MCF 10A (cell line): ENCODE measurements at regions of chr1 and their contacts with region 1.

Region 1: DNA sequence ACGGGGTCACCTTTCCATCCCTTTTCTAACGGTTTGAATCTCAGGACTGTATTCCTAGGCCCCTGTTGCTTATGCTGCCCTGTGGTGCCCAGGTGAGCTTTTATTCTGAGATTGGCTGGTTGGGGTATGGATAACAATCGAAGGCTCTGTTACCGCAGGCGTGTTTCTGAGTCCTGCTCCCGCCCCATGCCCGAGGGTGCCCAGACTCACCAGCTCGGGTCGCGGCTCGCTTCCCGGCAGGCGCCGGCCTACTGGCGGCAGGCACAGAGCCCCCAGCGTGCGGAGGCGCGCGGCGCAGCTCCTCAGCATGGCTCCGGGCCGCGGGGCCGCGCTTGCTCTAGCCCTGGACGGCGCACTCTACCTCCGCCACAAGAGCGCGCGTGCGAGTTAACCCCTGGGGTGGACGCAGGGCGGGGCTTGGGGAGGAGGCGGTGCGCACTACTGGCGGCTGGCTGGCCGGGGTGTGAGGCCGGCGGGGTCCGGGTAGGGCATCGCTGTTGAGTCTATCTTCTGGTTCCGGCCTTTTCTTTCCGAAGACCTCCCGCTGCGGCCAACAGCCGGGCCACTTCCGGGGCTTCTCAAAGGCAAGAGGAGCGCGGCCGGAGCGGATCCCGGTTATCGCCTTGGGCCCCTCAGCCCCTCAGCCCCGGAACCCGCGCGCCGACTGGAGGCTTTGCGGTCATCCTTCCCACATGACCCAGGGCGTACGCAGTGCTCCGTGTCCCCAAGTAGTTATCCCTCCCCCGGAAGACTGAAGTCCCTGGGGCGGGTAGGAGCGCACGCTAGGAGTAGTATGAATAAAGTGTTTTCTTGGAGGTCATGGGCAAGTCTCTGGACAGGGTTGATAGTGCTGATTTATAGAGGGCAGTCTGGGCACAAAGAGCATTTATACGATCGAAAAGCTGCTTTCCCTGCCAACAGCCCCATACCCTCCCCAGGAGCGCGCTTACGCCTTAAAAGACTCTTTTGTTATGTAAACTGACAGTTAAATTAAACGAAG is at the start of gene THEM4:
- DNase-seq: peak; percentile 99
- H3K4me3 Mint-ChIP-seq: peak within 1 kb of the TSS; percentile 99
- H3K27ac Mint-ChIP-seq: peak within 1 kb of the TSS; percentile 99
- H3K4me1 Mint-ChIP-seq: peaks cover 17% of the 10 kb centered on the region
- H3K27me3 Mint-ChIP-seq: no peaks in the 10 kb centered on the region
- CTCF ChIP-seq: peak; percentile 25
- total RNA-seq, gene THEM4: 27.5 and 29.1 TPM in 2 replicates

Region 2: GRCh38 chr1:151619489-151620093 is 289.9 kb before region 1 on chr1:
- CTCF ChIA-PET with region 1: no interaction called
- POLR2A ChIA-PET with region 1: no interaction called
- intact Hi-C with region 1: no loop called
- DNase-seq: peak; percentile 58
- H3K4me3 Mint-ChIP-seq: no peak overlapping the region
- H3K27ac Mint-ChIP-seq: peak overlapping the region; percentile 17
- H3K4me1 Mint-ChIP-seq: peaks cover 37% of the 10 kb centered on the region
- H3K27me3 Mint-ChIP-seq: no peaks in the 10 kb centered on the region
- CTCF ChIP-seq: no peak

Region 3: DNA sequence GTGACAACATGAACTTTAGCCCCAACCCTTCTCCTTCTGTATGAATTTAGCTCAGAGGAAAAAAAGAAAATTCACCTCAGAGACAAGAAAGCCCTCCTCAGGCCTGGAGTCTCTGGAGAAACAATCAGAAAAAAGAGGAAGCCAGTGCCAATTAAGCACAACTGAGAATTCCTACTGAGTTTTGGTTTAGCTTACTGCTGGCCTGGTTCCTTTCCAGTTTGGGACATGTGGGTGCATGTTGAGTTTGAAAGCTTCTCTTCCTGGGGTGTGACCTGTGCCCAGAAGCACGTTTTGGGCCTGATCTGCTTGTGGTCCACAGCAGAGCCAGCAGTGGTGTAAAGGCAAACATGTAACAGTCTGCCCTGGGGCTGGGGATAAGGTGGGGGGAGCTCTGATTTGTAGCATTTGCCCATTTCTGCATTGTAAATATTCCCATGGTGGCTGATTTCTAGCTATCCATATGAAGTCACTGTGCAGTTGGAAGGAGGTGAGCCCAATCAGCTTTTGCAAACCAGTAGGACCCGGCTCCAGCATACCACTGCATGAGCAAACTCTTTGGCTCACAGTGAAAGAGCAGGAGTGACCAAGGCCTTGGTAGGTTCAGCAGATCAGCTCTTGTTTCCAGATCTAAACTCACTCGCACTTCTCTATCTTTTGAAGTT is 51.3 kb before region 1 on chr1:
- CTCF ChIA-PET with region 1: interaction called, 3 read pairs
- POLR2A ChIA-PET with region 1: interaction called, 14 read pairs
- intact Hi-C with region 1: no loop called
- DNase-seq: peak; percentile 66
- H3K4me3 Mint-ChIP-seq: no peak overlapping the region
- H3K27ac Mint-ChIP-seq: peak overlapping the region; percentile 84
- H3K4me1 Mint-ChIP-seq: peaks cover 40% of the 10 kb centered on the region
- H3K27me3 Mint-ChIP-seq: no peaks in the 10 kb centered on the region
- CTCF ChIP-seq: no peak

Region 4: GRCh38 chr1:151898513-151898991 is 10.9 kb before region 1 on chr1:
- CTCF ChIA-PET with region 1: interaction called, 29 read pairs
- POLR2A ChIA-PET with region 1: interaction called, 56 read pairs
- intact Hi-C with region 1: no loop called
- DNase-seq: no peak
- H3K4me3 Mint-ChIP-seq: no peak overlapping the region
- H3K27ac Mint-ChIP-seq: no peak overlapping the region
- H3K4me1 Mint-ChIP-seq: peaks cover 10% of the 10 kb centered on the region
- H3K27me3 Mint-ChIP-seq: no peaks in the 10 kb centered on the region
- CTCF ChIP-seq: no peak

Region 5: DNA sequence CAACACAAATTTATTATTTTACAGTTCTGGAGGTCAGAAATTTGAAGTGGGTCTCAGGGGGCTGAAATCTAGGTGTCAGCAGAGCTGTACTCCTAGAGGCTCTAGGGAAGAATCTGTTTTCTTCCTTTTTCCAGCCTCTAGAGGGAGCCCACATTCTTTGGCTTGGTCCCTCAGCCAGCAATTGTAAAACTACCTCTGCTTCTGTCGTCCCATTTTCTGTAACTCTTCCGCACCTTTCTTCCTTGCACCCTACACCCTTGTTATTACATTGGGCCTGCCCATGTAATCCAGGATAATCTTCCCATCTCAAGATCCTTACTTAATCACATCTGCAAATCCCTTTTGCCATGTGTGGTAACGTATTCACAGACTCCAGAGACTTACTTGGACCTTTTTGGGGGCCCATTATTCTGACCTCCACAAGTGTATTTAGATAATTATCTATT is 24.6 kb after region 1 on chr1:
- CTCF ChIA-PET with region 1: interaction called, 7 read pairs
- POLR2A ChIA-PET with region 1: interaction called, 46 read pairs
- intact Hi-C with region 1: no loop called
- DNase-seq: peak; percentile 82
- H3K4me3 Mint-ChIP-seq: no peak overlapping the region
- H3K27ac Mint-ChIP-seq: no peak overlapping the region
- H3K4me1 Mint-ChIP-seq: peaks cover 11% of the 10 kb centered on the region
- H3K27me3 Mint-ChIP-seq: no peaks in the 10 kb centered on the region
- CTCF ChIP-seq: peak; percentile 96

Region 6: DNA sequence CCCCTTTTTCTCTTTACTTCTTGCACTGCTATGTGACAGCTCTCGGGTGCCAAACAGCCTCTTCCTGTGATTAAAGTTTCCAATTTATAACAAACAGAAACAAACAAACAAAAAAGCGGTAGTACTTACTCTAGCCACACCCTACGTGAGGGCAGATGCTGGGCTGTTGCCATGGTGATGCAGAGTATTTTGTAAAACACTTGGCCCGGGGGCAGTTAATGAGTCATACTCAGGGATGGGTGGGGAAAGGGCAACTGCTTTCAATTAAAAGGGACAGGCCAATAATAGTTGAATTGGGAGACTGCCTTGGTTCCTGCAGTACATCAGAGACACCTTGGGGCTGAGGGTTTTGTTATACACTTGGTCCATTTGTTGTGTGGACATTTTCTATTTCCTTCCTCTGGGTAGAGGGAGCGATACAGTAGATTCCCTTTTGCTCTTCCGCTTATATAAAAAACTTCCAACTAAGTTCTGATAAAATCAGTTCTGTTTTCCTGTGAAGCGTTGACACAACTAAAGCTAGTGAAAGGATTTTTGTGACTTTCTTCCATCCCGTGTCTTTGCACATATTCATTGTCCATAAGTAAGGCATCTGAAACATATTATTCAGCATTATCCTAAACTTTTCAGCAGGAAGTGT is 36.4 kb after region 1 on chr1:
- CTCF ChIA-PET with region 1: interaction called, 13 read pairs
- POLR2A ChIA-PET with region 1: interaction called, 18 read pairs
- intact Hi-C with region 1: no loop called
- DNase-seq: peak; percentile 100
- H3K4me3 Mint-ChIP-seq: peak overlapping the region; percentile 16
- H3K27ac Mint-ChIP-seq: peak overlapping the region; percentile 99
- H3K4me1 Mint-ChIP-seq: peaks cover 33% of the 10 kb centered on the region
- H3K27me3 Mint-ChIP-seq: no peaks in the 10 kb centered on the region
- CTCF ChIP-seq: no peak

Region 7: DNA sequence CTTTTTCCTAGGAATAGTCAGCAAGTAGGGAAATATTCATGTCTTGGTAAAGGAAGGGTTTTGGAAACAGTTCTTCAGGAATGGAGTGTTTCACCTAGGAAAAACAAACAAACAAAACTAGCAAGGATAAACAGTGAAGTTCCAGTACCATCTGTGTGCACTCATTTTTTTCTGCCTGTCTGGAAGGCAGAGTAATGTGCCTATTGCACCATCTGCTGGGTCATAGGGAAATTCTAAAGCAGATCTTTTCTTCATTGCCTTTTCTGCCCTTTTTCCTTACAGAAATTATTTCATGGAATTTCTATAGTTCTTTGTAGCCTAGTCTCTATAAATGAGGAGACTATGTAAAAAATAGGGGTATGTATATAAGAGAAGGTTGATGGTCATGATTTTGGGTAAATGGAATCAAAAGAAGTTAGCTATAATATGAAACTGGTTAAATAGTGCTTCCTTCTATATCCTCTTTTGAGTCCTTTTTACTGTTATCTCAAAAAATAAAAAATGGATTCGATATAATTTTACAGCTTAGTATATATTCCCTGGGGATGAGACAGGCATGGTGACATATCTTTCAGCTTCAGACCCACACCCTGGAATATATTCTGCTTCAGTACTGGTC is 318.0 kb after region 1 on chr1:
- CTCF ChIA-PET with region 1: no interaction called
- POLR2A ChIA-PET with region 1: no interaction called
- intact Hi-C with region 1: no loop called
- DNase-seq: peak; percentile 66
- H3K4me3 Mint-ChIP-seq: no peak overlapping the region
- H3K27ac Mint-ChIP-seq: no peak overlapping the region
- H3K4me1 Mint-ChIP-seq: peaks cover 17% of the 10 kb centered on the region
- H3K27me3 Mint-ChIP-seq: no peaks in the 10 kb centered on the region
- CTCF ChIP-seq: peak; percentile 79

Region 8: DNA sequence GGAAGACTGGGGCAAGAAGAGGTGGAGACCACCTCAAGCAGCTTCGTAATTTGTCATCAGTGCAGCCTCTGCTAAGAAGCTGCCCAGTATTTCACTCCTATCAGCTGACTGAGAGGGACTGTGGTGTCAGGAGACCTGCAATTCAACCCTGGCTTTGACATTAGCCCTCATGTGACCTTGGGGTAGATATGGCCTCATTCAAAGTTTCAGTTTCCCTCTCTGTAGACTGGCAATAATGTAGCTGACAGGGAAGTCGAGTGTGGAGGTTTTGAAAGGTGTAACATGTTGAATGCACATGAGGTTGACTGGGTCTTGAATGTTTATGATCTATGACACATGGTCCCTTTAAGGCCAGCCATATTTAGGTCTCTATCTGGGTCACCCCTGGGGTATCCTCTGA is 1058.8 kb after region 1 on chr1:
- CTCF ChIA-PET with region 1: no interaction called
- POLR2A ChIA-PET with region 1: no interaction called
- intact Hi-C with region 1: no loop called
- DNase-seq: no peak
- H3K4me3 Mint-ChIP-seq: no peak overlapping the region
- H3K27ac Mint-ChIP-seq: no peak overlapping the region
- H3K4me1 Mint-ChIP-seq: peaks cover 21% of the 10 kb centered on the region
- H3K27me3 Mint-ChIP-seq: no peaks in the 10 kb centered on the region
- CTCF ChIP-seq: no peak